Activated CD4-positive, alpha-beta memory T cell treated with anti-CD3 and anti-CD28 coated beads for 36 hours (primary cell): ENCODE measurements at regions of chr21 and their contacts with region 1.

Region 1: GRCh38 chr21:45768751-45769070 is 125.2 kb downstream of the PCBP3 start:
- DNase-seq: peak; percentile 48
- H3K4me3 Mint-ChIP-seq: peak overlapping the region; percentile 31
- H3K27ac Mint-ChIP-seq: peak overlapping the region; percentile 87
- H3K4me1 Mint-ChIP-seq: peaks cover 41% of the 10 kb centered on the region
- H3K27me3 Mint-ChIP-seq: no peaks in the 10 kb centered on the region

Region 2: DNA sequence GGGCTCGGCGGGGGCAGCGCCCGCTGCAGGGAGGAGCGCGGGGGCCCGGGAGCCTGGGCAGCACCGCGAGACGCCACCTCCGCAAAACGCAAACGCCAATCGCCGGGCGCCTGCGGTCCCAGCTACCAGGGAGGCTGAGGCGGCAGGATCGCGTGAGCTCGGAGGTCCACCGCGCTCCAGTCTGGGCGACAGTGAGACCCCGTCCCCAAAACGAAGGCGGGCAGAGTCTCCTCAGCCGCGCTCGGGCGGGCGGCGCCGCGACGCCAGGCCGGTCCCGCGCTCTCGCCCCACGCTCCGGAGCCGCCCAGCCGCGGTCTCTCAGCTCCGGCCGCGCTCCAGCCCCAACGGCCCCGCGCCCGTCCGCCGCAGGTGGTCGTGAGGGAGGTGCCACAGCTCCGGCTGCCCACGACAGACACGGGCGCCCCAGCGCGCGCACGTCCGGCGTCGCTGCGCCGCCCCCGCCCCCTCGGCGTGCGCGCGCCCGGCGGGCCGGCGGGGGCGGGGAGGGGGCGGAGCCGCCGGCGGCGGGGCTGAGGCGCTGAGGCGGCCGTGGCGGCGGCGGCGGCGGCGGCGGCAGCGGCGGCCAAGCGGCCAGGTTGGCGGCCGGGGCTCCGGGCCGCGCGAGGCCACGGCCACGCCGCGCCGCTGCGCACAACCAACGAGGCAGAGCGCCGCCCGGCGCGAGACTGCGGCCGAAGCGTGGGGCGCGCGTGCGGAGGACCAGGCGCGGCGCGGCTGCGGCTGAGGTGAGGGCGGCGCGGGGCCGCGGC is 694.5 kb before region 1 on chr21 and contains the start of gene ADARB1:
- CTCF ChIA-PET with region 1: no interaction called
- POLR2A ChIA-PET with region 1: no interaction called
- intact Hi-C with region 1: loop called (anchors 1 kb)
- DNase-seq: peak; percentile 64
- H3K4me3 Mint-ChIP-seq: peak within 1 kb of the TSS; percentile 84
- H3K27ac Mint-ChIP-seq: peak within 1 kb of the TSS; percentile 75
- H3K4me1 Mint-ChIP-seq: peaks cover 43% of the 10 kb centered on the region
- H3K27me3 Mint-ChIP-seq: no peaks in the 10 kb centered on the region
- total RNA-seq, gene ADARB1: 37.6 to 40.6 TPM

Region 3: GRCh38 chr21:45643021-45643980 is 125.4 kb before region 1 on chr21 and contains the start of gene PCBP3:
- CTCF ChIA-PET with region 1: no interaction called
- POLR2A ChIA-PET with region 1: no interaction called
- intact Hi-C with region 1: loop called (anchors 2 kb)
- DNase-seq: peak; percentile 98
- H3K4me3 Mint-ChIP-seq: peak within 1 kb of the TSS; percentile 71
- H3K27ac Mint-ChIP-seq: peak within 1 kb of the TSS; percentile 49
- H3K4me1 Mint-ChIP-seq: peaks cover 25% of the 10 kb centered on the region
- H3K27me3 Mint-ChIP-seq: peaks cover 18% of the 10 kb centered on the region
- total RNA-seq, gene PCBP3: 5.3 to 6.6 TPM

Region 4: GRCh38 chr21:45698493-45699184 is 70.1 kb before region 1 on chr21:
- CTCF ChIA-PET with region 1: no interaction called
- POLR2A ChIA-PET with region 1: no interaction called
- intact Hi-C with region 1: loop called (anchors 1 kb)
- DNase-seq: peak; percentile 44
- H3K4me3 Mint-ChIP-seq: no peak overlapping the region
- H3K27ac Mint-ChIP-seq: peak overlapping the region; percentile 59
- H3K4me1 Mint-ChIP-seq: peaks cover 19% of the 10 kb centered on the region
- H3K27me3 Mint-ChIP-seq: no peaks in the 10 kb centered on the region